ENCODE measurements at regions of chr20 and their contacts with region 1.

Region 1: DNA sequence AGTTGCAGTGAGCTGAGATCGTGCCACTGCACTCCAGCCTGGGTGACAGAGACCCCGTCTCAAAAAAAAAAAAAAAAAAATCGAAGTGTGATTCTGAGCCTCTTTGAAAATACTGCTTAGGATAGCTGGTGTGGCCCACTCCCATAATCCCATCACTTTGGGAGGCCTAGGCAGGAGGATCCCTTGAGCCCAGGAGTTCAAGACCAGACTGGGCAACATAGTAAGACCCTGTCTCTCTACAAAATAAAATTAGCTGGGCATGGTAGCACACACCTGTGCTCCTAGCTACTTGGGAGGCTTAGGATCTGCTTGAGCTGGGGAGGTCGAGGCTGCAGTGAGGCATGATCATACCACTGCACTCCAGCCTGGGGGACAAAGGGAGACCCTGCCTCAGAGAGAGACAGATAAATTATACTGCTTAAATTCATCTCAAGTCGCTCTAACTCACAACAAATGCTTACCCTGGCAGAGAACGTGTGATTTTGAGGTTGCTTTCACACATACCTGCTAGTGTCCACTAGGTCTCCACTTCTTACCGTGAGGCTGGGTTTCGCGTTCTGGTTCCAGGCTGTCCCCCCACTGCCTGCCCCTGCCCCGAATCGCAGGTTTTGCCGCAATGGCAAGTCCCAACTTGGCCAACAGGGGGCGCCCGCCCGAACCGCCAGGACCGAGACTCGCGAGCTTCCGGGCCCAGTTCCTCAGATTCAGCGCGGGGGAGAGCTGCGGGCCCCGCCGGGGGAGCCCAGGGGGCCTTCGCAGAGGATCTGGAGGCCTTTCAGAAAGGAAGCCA is 12.3 kb upstream of the TMC2 start:
- DNase-seq: peak; percentile 84 to 96 (median 91)
- ATAC-seq: peak; percentile 82
- H3K4me3 ChIP-seq: peak overlapping the region; percentile 94
- H3K4me3 Mint-ChIP-seq: peak overlapping the region; percentile 91
- H3K27ac ChIP-seq: peak overlapping the region; percentile 7 to 23
- H3K27ac Mint-ChIP-seq: peak overlapping the region; percentile 37
- H3K4me1 ChIP-seq: peaks cover 19% of the 10 kb centered on the region
- H3K4me1 Mint-ChIP-seq: peaks cover 15% of the 10 kb centered on the region
- H3K27me3 ChIP-seq: no peaks in the 10 kb centered on the region
- H3K27me3 Mint-ChIP-seq: no peaks in the 10 kb centered on the region
- CTCF ChIP-seq: peak; percentile 98

Region 2: DNA sequence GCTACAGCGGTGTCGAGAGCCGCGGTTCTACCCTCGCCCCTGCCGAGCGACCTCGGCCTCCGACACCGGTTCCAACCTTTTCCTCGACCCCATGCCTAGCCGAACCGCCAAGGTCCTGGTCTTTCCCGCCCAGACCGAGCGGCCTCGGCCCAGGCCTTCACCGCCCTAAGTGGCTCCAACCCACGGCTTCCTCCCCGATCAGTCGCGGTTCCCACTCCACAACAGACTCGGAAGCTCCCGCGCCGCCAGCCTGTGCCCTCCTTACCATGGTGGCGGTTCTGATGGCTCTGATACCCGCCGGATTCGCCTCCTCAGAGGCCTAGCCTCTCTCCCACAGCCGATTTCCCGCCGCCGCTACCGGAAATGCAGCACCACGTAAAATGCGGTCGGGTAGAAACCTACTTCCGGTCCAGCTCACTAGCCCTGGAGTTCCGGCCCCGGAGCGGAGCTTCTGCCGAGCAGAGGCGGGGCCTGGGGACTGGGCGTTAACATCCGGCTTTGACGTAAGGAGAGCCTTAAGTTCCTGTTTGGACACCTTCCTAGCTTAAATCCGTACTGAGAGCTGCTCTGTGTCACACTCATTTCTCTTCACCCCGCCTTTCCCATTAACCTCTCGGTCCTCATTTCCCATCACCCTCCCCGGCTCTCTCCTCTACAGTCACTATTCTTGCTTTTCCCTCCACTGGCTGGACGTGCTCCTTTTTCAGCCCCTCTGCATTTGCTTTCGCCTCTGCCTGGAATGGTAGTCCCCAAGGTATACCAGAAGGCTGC is 53.5 kb before region 1 on chr20 and contains the start of gene SNRPB:
- CTCF ChIA-PET with region 1: interaction called, 16 read pairs
- POLR2A ChIA-PET with region 1: interaction called, 20 read pairs
- intact Hi-C with region 1: loop called in 1 of 2 experiments (anchors 5 kb)
- DNase-seq: peak; percentile 94 to 99 (median 95)
- ATAC-seq: peak; percentile 93
- H3K4me3 ChIP-seq: peak within 1 kb of the TSS; percentile 90
- H3K4me3 Mint-ChIP-seq: peak within 1 kb of the TSS; percentile 98
- H3K27ac ChIP-seq: peak within 1 kb of the TSS; percentile 91 to 96
- H3K27ac Mint-ChIP-seq: peak within 1 kb of the TSS; percentile 98
- H3K4me1 ChIP-seq: peaks cover 23% of the 10 kb centered on the region
- H3K4me1 Mint-ChIP-seq: peaks cover 54% of the 10 kb centered on the region
- H3K27me3 ChIP-seq: no peaks in the 10 kb centered on the region
- H3K27me3 Mint-ChIP-seq: no peaks in the 10 kb centered on the region
- CTCF ChIP-seq: no peak
- total RNA-seq, gene SNRPB: 146 to 147 TPM

Region 3: DNA sequence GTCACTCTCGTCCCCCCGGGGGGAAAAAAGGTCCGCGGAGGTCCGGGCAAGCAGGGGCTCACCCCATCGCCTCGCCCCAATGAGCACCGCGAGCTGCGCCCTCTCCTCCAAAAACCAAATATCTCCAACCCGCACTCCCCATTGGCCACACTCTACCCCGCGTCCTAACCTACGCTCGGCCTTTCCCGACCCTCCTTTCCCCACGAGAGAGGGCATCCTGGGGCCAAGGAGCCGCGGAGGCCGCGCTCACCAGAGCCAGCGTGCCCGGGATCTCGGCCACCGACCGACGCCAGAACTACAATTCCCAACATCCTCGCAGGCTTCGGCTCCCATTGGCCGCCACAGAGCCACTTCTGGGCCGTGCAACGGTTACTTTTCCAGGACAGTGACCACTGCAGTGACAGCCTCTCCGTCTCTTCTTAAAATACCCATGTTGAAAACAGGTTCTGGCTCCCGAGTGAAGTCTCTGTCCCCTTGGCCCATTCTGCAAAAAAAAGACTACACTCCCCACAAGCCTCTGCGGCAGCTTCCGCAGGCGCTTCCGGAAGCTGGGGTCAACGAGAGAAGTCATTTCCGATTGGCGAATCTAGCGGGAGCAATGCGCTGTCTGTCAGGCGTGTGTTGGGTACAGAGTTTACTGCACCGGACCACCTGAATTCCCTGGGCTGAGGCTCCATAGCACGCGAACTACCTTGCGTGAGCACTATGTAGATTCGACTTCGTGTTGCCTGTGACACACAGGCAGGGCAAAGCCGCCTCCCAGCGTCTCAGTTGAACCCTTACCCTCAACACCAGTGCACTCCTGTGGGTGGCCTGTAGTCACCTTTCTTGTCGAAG is 15.3 kb before region 1 on chr20 and contains the start of gene ZNF343:
- CTCF ChIA-PET with region 1: interaction called, 26 read pairs
- POLR2A ChIA-PET with region 1: interaction called, 7 read pairs
- intact Hi-C with region 1: loop called (anchors 2 kb)
- DNase-seq: peak; percentile 58 to 89 (median 71)
- ATAC-seq: peak; percentile 94
- H3K4me3 ChIP-seq: peak within 1 kb of the TSS; percentile 90
- H3K4me3 Mint-ChIP-seq: peak within 1 kb of the TSS; percentile 99
- H3K27ac ChIP-seq: peak within 1 kb of the TSS in 1 of 2 donors; percentile 72
- H3K27ac Mint-ChIP-seq: peak within 1 kb of the TSS; percentile 81
- H3K4me1 ChIP-seq: peaks cover 21% of the 10 kb centered on the region
- H3K4me1 Mint-ChIP-seq: peaks cover 29% of the 10 kb centered on the region
- H3K27me3 ChIP-seq: peaks cover 0 to 13% of the 10 kb centered on the region in 2 experiments
- H3K27me3 Mint-ChIP-seq: peaks cover 25% of the 10 kb centered on the region
- CTCF ChIP-seq: no peak
- total RNA-seq, gene ZNF343: 5.0 to 5.1 TPM

Region 4: DNA sequence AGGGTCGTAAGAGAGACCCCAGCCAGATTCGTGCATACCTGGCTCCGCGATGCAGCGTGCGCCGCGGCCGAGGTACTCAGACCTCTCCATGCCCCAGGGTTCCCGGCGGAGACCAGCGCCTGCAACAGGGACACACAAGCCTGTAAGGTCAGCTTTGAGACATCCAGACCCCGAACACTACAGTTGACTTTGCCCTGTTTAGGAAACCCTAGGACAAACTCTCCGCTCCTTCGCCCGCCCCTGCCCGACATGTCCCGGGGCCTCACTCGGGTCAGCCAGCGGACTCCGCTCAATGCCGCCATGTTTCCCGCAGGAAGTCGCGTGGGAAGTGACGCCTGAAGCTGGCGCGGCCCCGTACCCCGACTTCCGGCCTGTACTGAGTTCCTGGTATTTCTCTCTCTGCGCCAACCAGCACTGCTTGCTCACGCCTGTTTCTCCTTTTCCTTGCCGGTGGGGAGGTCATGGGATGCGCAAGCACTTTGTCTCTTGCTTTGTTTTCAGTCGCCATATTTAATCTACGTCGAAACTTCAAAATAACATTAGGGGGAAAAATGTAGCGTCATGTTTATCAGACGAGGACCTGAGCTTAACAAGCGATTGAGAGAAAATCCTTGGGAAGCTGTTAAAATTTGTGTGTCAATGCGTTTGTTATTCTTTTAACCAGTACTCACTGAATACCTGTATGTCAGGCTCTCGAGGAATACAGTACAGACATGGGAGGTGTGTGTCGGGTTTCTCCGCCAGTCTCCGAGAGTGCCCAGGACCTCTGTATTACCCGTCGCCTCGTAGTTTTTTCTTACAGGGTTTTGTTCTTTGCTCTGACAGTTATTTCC is 140.0 kb after region 1 on chr20 and contains the start of gene IDH3B:
- CTCF ChIA-PET with region 1: interaction called, 4 read pairs
- POLR2A ChIA-PET with region 1: interaction called, 5 read pairs
- intact Hi-C with region 1: loop called in 1 of 2 experiments (anchors 5 kb)
- DNase-seq: peak; percentile 83 to 96 (median 89)
- ATAC-seq: peak; percentile 99
- H3K4me3 ChIP-seq: peak within 1 kb of the TSS; percentile 90
- H3K4me3 Mint-ChIP-seq: peak within 1 kb of the TSS; percentile 94
- H3K27ac ChIP-seq: peak within 1 kb of the TSS; percentile 77 to 96
- H3K27ac Mint-ChIP-seq: peak within 1 kb of the TSS; percentile 91
- H3K4me1 ChIP-seq: peaks cover 18% of the 10 kb centered on the region
- H3K4me1 Mint-ChIP-seq: peaks cover 28% of the 10 kb centered on the region
- H3K27me3 ChIP-seq: no peaks in the 10 kb centered on the region
- H3K27me3 Mint-ChIP-seq: no peaks in the 10 kb centered on the region
- CTCF ChIP-seq: no peak
- total RNA-seq, gene IDH3B: 171 to 181 TPM

Region 5: DNA sequence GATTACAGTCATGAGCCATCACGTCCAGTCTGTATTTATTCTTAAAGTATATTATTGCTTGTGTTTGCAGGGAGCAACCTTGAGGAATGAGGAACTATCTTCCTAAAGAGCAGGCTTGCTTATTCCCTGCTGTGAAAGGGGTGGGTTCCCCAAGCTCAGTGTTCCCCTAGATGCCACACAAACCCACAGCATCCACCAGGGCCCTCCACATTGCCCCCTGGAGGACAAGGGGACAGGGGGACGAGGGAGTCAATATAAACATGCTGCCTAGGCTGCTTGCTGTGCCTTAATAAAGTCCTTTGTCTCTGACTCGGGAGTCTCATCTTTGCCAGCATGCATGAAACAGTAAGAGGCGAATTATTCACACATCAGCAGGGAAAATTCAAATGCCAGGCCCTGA is 147.9 kb after region 1 on chr20:
- CTCF ChIA-PET with region 1: no interaction called
- POLR2A ChIA-PET with region 1: no interaction called
- intact Hi-C with region 1: loop called in 1 of 2 experiments (anchors 1 kb)
- DNase-seq: no peak
- ATAC-seq: no peak
- H3K4me3 ChIP-seq: no peak overlapping the region
- H3K4me3 Mint-ChIP-seq: no peak overlapping the region
- H3K27ac ChIP-seq: no peak overlapping the region
- H3K27ac Mint-ChIP-seq: no peak overlapping the region
- H3K4me1 ChIP-seq: no peaks in the 10 kb centered on the region
- H3K4me1 Mint-ChIP-seq: no peaks in the 10 kb centered on the region
- H3K27me3 ChIP-seq: no peaks in the 10 kb centered on the region
- H3K27me3 Mint-ChIP-seq: peaks cover 10% of the 10 kb centered on the region
- CTCF ChIP-seq: no peak

Region 6: GRCh38 chr20:2742934-2743559 is 218.9 kb after region 1 on chr20:
- CTCF ChIA-PET with region 1: no interaction called
- POLR2A ChIA-PET with region 1: no interaction called
- intact Hi-C with region 1: loop called (anchors 5 to 10 kb)
- DNase-seq: peak; percentile 60 to 88 (median 70)
- ATAC-seq: peak; percentile 54
- H3K4me3 ChIP-seq: no peak overlapping the region
- H3K4me3 Mint-ChIP-seq: peak overlapping the region; percentile 59
- H3K27ac ChIP-seq: peak overlapping the region in 1 of 2 donors; percentile 60
- H3K27ac Mint-ChIP-seq: peak overlapping the region; percentile 90
- H3K4me1 ChIP-seq: peaks cover 47% of the 10 kb centered on the region
- H3K4me1 Mint-ChIP-seq: peaks cover 51% of the 10 kb centered on the region
- H3K27me3 ChIP-seq: no peaks in the 10 kb centered on the region
- H3K27me3 Mint-ChIP-seq: no peaks in the 10 kb centered on the region
- CTCF ChIP-seq: peak; percentile 90

Region 7: GRCh38 chr20:3000852-3001523 is 476.9 kb after region 1 on chr20:
- CTCF ChIA-PET with region 1: no interaction called
- POLR2A ChIA-PET with region 1: no interaction called
- intact Hi-C with region 1: loop called (anchors 1 to 2 kb)
- DNase-seq: peak in 4 of 14 experiments; percentile 7 to 65 (median 56)
- ATAC-seq: peak; percentile 89
- H3K4me3 ChIP-seq: no peak overlapping the region
- H3K4me3 Mint-ChIP-seq: no peak overlapping the region
- H3K27ac ChIP-seq: no peak overlapping the region
- H3K27ac Mint-ChIP-seq: no peak overlapping the region
- H3K4me1 ChIP-seq: no peaks in the 10 kb centered on the region
- H3K4me1 Mint-ChIP-seq: no peaks in the 10 kb centered on the region
- H3K27me3 ChIP-seq: no peaks in the 10 kb centered on the region
- H3K27me3 Mint-ChIP-seq: no peaks in the 10 kb centered on the region
- CTCF ChIP-seq: peak; percentile 60